ENCODE measurements at regions of chr2 and their contacts with region 1.

Region 1: GRCh38 chr2:128321784-128322714 is 3.4 kb upstream of the HS6ST1 start:
- DNase-seq: peak; percentile 72 to 82
- ATAC-seq: peak; percentile 70 to 75
- H3K4me3 ChIP-seq: peak overlapping the region; percentile 64 to 80 (median 78)
- H3K27ac ChIP-seq: peak overlapping the region; percentile 85 to 95 (median 88)
- H3K4me1 ChIP-seq: peaks cover 14 to 32% of the 10 kb centered on the region in 2 donors
- H3K27me3 ChIP-seq: no peaks in the 10 kb centered on the region
- CTCF ChIP-seq: peak; percentile 80 to 99 (median 94)
- POLR2A ChIP-seq: peak; percentile 42 to 60

Region 2: DNA sequence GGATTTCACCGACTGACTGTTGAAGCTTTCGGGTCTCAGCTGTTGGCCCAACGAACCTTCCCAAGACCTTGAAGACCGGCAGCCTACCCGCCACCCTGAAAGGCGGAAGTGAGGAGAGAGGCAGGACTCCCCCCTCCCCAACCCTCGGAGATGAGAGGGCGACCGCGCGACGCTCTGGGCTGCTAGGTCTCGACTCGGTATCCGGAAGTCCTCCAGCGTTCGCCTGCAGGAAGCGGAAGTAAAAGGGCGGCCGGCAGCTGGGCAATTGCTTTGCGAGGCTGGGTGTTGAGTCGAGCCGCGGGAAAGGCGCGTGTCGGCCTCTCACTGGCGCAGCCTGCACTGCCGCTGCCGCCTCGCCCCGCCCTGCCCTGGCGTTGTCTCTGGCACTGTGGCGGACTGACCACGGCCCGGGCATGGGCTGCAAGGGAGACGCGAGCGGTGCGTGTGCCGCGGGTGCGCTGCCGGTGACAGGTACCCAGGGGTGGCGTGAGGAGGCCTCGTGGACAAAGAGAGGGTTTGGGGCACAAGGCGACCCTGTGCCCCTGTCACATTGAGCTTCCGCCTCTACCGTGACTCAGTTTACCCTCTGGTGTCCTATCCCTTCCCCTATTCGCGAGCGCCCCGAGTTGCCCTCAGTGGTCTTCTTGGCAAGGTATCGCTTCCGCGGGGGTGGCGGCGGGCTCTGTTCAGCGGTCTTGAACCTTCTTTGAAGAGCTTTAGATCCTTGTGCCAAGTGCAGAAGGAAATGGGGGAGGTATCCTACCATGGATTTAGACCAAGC is 230.9 kb before region 1 on chr2 and contains the start of gene UGGT1:
- in situ Hi-C with region 1: no loop called
- intact Hi-C with region 1: loop called (anchors 10 kb)
- DNase-seq: peak; percentile 94 to 95
- ATAC-seq: peak; percentile 99
- H3K4me3 ChIP-seq: peak within 1 kb of the TSS; percentile 86 to 99 (median 92)
- H3K27ac ChIP-seq: peak within 1 kb of the TSS; percentile 83 to 95 (median 86)
- H3K4me1 ChIP-seq: peaks cover 7 to 10% of the 10 kb centered on the region in 2 donors
- H3K27me3 ChIP-seq: no peaks in the 10 kb centered on the region
- CTCF ChIP-seq: no peak
- POLR2A ChIP-seq: peak; percentile 72 to 83
- total RNA-seq, gene UGGT1: 35.1 to 51.7 (median 45.2) TPM

Region 3: DNA sequence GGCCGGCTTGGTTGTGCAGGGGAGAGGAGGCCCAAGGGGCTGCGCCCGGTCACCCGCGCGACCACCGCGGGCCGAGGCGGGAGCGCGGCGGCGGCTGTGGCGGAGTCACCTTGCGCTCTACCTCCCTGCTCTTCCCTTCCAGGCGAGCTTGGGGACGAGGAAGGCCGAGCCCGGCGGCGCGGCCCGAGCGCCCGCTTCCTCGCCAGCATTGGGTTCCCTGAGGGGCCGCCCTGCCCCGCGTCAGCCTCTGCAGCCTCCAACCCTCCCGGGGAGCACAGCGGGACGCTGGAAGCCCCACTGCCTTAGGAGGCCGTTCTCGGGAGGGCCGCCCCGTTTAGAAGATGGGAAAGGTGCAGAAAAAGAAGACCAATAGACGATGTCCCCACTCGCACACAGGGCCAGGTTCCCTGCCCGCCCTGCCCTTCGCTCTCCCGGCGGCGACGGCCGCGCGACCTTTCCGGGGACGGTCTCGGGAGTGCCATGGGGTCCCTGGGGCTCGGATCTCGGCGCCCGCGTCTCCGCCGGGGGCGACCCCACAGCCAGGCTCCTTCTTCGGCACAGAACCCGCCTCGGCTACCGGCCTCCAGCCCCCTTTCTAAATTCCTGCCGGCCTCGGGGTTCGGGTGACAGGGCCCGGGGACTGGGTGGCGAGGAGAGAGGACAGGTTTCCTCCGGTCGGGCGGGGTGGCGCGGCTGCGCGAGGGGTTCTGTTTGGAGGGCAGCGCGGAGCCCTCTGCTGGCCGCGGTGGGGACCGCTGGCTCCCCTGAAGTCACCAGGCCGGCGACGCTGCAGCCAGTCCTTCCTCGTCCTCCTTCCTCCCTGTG is 88.9 kb before region 1 on chr2:
- in situ Hi-C with region 1: no loop called
- intact Hi-C with region 1: loop called (anchors 2 kb)
- DNase-seq: peak; percentile 68 to 81
- ATAC-seq: peak; percentile 91 to 93
- H3K4me3 ChIP-seq: peak overlapping the region; percentile 75 to 89 (median 82)
- H3K27ac ChIP-seq: peak overlapping the region; percentile 88 to 92 (median 92)
- H3K4me1 ChIP-seq: peaks cover 8 to 10% of the 10 kb centered on the region in 2 donors
- H3K27me3 ChIP-seq: no peaks in the 10 kb centered on the region
- CTCF ChIP-seq: peak; percentile 87 to 95 (median 92)
- POLR2A ChIP-seq: no peak

Region 4: DNA sequence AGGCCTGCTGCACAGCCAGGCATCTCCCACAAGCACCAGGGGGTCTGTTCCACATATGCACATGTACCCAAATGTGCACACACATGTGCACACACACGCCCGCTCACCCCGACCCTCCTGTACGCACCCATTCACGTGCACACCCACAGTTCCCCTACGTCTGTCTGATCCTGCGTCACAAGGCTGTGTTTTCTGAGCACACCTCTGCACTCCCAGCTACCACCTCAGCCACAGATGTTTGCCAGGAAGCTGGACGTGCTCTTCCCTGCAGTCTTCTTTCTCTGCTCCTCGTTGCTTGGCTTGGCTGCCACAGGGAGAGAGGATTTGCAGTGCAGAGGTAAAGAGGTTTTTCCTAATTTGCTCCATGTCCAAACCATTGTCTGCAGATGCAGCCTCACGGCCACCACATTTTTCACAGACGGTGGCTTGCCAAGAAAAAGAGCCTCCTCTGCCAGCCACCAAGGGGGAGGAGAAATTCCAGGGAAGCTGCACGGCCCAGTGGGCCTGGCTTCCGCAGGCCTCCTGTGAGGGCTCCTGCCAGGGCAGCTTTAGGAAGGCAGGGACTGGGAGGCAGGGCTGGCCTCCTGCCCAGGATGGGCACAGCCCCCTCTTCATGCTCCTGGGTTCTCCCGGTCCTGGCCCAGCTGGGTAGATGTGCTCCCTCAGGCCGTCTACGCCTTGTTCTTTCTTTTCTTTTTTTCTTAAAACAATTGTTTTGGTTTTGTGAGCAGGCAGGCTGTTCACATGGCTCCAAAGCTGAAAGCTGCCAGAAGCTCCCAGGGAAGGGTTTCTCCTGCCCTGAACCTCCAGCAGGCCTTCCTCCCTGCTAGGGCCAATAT is 25.9 kb after region 1 on chr2:
- in situ Hi-C with region 1: no loop called
- intact Hi-C with region 1: no loop called
- DNase-seq: no peak
- ATAC-seq: peak in 1 of 2 donors; percentile 36
- H3K4me3 ChIP-seq: no peak overlapping the region
- H3K27ac ChIP-seq: no peak overlapping the region
- H3K4me1 ChIP-seq: peaks cover 4 to 6% of the 10 kb centered on the region in 2 donors
- H3K27me3 ChIP-seq: no peaks in the 10 kb centered on the region
- CTCF ChIP-seq: no peak
- POLR2A ChIP-seq: no peak

Region 5: GRCh38 chr2:128531856-128532255 is 209.8 kb after region 1 on chr2:
- in situ Hi-C with region 1: no loop called
- intact Hi-C with region 1: loop called (anchors 2 kb)
- DNase-seq: no peak
- ATAC-seq: no peak
- H3K4me3 ChIP-seq: no peak overlapping the region
- H3K27ac ChIP-seq: no peak overlapping the region
- H3K4me1 ChIP-seq: no peaks in the 10 kb centered on the region
- H3K27me3 ChIP-seq: no peaks in the 10 kb centered on the region
- CTCF ChIP-seq: no peak
- POLR2A ChIP-seq: no peak

Region 6: GRCh38 chr2:129877289-129877779 is 1555.3 kb after region 1 on chr2:
- in situ Hi-C with region 1: no loop called
- intact Hi-C with region 1: loop called (anchors 10 kb)
- DNase-seq: peak; percentile 86 to 89
- ATAC-seq: peak; percentile 87 to 91
- H3K4me3 ChIP-seq: peak overlapping the region; percentile 73 to 91 (median 83)
- H3K27ac ChIP-seq: peak overlapping the region; percentile 80 to 85 (median 83)
- H3K4me1 ChIP-seq: peaks cover 5 to 12% of the 10 kb centered on the region in 2 donors
- H3K27me3 ChIP-seq: no peaks in the 10 kb centered on the region
- CTCF ChIP-seq: no peak
- POLR2A ChIP-seq: no peak

Measured in gastrocnemius medialis (tissue), 4 donors.